ENCODE measurements at regions of chr16 and their contacts with region 1.

Region 1: GRCh38 chr16:3059000-3059722 is 6.3 kb upstream of the IL32 start:
- DNase-seq: peak; percentile 93
- ATAC-seq: peak; percentile 83
- H3K4me3 Mint-ChIP-seq: peak overlapping the region; percentile 84
- H3K27ac Mint-ChIP-seq: peak overlapping the region; percentile 93
- H3K4me1 Mint-ChIP-seq: peaks cover 62% of the 10 kb centered on the region
- H3K27me3 Mint-ChIP-seq: no peaks in the 10 kb centered on the region

Region 2: GRCh38 chr16:2964475-2965336 is 94.5 kb before region 1 on chr16:
- CTCF ChIA-PET with region 1: no interaction called
- POLR2A ChIA-PET with region 1: no interaction called
- intact Hi-C with region 1: no loop called
- DNase-seq: peak; percentile 82
- ATAC-seq: peak; percentile 18
- H3K4me3 Mint-ChIP-seq: peak overlapping the region; percentile 57
- H3K27ac Mint-ChIP-seq: no peak overlapping the region
- H3K4me1 Mint-ChIP-seq: peaks cover 32% of the 10 kb centered on the region
- H3K27me3 Mint-ChIP-seq: peaks cover 31% of the 10 kb centered on the region

Region 3: GRCh38 chr16:3003582-3004302 is 55.4 kb before region 1 on chr16:
- CTCF ChIA-PET with region 1: interaction called, 3 read pairs
- POLR2A ChIA-PET with region 1: interaction called, 3 read pairs
- intact Hi-C with region 1: loop called in 1 of 2 experiments (anchors 1 kb)
- DNase-seq: peak; percentile 99
- ATAC-seq: peak; percentile 100
- H3K4me3 Mint-ChIP-seq: peak overlapping the region; percentile 32
- H3K27ac Mint-ChIP-seq: no peak overlapping the region
- H3K4me1 Mint-ChIP-seq: peaks cover 23% of the 10 kb centered on the region
- H3K27me3 Mint-ChIP-seq: peaks cover 6% of the 10 kb centered on the region

Region 4: DNA sequence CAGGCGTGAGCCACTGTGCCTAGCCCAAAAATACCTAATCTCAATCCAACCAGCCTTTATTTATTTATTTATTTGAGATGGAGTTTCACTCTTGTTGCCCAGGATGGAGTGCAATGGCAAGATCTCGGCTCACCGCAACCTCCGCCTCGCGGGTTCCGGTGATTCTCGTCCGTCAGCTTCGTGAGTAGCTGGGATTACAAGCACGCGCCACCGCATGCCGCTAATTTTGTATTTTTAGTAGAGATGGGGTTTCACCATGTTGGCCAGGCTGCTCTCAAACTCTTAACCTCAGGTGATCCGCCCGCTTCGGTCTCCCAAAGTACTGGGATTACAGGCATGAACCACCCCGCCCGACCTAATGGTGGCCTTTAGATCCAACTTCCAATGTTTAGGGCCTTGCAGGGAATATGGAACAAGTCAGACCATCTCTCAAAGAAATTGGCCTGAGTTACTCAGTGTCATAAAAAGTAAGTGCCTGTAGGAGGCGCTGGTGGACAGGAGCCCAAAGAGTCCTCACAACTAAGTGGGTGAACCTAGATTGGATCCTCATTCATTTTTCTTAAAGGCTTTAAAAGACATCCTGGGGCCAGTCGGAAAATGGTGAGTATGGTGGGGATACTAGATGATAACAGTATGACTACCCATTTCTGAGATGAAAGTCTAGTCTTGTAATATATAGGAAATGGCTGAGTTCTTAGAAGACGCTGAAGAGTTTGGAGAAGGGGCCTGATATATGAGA is 35.3 kb after region 1 on chr16:
- CTCF ChIA-PET with region 1: interaction called, 7 read pairs
- POLR2A ChIA-PET with region 1: no interaction called
- intact Hi-C with region 1: loop called in 1 of 2 experiments (anchors 1 kb)
- DNase-seq: peak; percentile 77
- ATAC-seq: peak; percentile 53
- H3K4me3 Mint-ChIP-seq: no peak overlapping the region
- H3K27ac Mint-ChIP-seq: peak overlapping the region; percentile 29
- H3K4me1 Mint-ChIP-seq: peaks cover 32% of the 10 kb centered on the region
- H3K27me3 Mint-ChIP-seq: no peaks in the 10 kb centered on the region

Region 5: DNA sequence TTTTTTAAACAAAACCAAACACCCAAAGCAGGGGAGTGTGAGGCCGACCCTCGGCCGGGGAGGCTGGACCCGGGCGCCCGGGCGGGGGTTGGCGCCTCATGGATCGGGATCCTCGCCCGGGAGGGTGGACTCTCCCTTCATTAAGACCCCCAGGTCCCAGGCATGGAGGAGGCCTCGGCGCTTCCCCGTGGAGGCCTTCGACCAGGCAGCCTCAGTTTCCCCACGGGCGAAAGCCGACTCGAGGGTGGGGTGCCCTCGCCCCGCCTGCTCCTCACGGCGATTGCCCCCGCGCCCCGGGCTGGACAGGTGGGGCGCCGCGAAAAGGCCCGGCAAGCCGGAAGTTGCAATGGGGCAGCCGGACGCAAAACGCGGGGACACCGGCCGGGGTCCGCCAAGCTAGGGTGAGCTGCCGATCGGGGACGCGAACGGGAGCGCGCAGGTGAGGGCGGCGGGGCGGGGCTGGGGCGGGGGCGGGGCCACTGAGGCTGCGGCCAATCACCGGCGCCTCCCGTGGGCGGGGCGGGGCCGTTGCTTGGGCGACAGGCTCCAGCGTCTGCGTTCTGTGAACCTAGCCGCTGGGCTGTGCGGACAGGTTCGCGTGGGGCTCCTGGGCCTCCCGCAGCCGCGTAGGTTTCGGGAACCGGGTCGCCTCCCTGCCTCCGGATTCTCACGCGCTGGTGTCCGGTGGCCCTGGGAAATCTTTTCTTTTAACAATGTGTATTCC is 47.2 kb after region 1 on chr16:
- CTCF ChIA-PET with region 1: interaction called, 7 read pairs
- POLR2A ChIA-PET with region 1: no interaction called
- intact Hi-C with region 1: loop called (anchors 1 to 2 kb)
- DNase-seq: peak; percentile 96
- ATAC-seq: peak; percentile 88
- H3K4me3 Mint-ChIP-seq: peak overlapping the region; percentile 76
- H3K27ac Mint-ChIP-seq: peak overlapping the region; percentile 94
- H3K4me1 Mint-ChIP-seq: peaks cover 31% of the 10 kb centered on the region
- H3K27me3 Mint-ChIP-seq: no peaks in the 10 kb centered on the region

Region 6: DNA sequence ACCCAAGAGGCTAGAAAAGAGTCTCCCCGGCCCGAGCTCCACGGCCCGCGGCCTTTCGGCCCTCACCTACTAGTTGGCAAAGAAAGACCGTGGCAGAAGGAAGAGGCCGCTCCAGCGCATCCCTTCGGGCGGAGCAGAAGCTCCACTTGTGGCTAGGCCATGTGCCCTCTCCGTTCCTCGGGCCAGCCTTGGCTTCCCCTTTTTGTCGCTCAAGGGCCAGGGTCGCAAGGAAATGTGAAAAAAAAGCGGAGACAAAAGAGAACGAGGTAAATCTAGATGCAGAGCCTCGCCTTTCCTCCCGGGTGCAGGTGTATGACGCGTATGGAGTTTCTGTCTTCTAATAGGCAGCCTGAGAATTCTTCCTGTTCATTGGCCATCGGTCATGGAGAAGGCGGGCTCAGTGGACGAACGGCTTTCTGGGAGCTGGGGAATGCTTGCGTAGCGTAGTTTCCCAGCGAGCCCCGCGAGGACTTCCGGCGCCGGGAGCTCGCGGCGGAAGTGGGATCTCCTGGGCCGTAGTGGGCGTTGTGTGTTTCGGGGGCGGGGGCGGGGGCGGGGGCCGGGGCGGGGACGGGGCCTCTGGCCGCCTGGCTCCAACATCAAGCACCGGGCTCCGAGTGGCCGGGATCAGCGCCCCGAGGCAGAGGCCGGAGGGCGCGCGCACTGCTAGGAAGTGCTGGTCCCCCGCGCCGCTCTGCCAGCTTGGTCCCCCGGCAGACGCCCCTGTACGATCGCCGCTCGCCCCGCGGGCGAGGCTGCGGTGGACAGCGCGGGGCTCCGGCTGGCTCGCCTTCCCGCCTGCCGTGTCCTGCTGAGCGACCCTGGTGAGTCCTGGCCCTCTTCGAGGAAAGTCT is 75.6 kb after region 1 on chr16 and contains the start of gene ZNF213:
- CTCF ChIA-PET with region 1: interaction called, 83 read pairs
- POLR2A ChIA-PET with region 1: interaction called, 3 read pairs
- intact Hi-C with region 1: loop called (anchors 1 kb)
- DNase-seq: peak; percentile 96
- ATAC-seq: peak; percentile 97
- H3K4me3 Mint-ChIP-seq: peak within 1 kb of the TSS; percentile 98
- H3K27ac Mint-ChIP-seq: peak within 1 kb of the TSS; percentile 95
- H3K4me1 Mint-ChIP-seq: peaks cover 30% of the 10 kb centered on the region
- H3K27me3 Mint-ChIP-seq: no peaks in the 10 kb centered on the region
- total RNA-seq, gene ZNF213: 7.6 to 8.3 TPM

Region 7: DNA sequence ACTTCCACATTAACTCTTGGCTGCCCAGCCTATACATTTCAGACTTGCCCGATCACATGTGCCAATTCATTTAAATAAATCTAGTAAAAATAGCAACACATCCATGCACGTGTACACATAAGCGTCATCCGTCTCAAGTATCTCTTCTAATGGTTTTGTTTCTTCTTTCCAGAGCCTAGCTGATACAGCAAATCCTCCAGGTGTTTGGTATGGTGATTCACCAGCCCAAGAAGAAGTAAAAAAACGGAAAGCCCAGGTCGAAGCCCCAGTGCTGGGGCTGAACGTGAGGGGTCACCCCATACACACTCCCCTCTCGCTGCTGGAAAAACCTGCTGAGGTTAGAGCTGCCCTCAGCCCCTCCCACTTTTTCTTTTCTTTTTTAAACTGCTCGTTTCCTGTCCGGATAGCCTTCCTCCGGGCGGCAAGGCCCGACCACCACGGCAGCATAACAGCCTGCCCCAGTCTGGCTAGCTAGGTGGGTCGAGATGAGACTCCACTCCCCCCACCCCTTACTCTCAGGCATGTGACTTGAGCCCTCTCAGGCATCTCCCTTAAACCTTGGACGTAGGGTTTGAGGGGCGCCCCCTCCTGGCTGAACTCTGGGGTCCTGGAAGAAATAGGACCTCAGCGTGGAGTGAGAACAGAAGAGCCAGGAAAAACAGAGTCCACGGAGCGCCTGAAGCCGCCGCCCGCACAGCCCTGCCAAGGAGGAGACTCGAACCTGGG is 114.9 kb after region 1 on chr16:
- CTCF ChIA-PET with region 1: interaction called, 18 read pairs
- POLR2A ChIA-PET with region 1: no interaction called
- intact Hi-C with region 1: no loop called
- DNase-seq: peak; percentile 61
- ATAC-seq: peak; percentile 10
- H3K4me3 Mint-ChIP-seq: peak overlapping the region; percentile 47
- H3K27ac Mint-ChIP-seq: peak overlapping the region; percentile 26
- H3K4me1 Mint-ChIP-seq: peaks cover 37% of the 10 kb centered on the region
- H3K27me3 Mint-ChIP-seq: peaks cover 51% of the 10 kb centered on the region

Measured in activated CD4-positive, alpha-beta T cell treated with anti-CD3 and anti-CD28 coated beads for 36 hours (primary cell).